IMR-90 (cell line): ENCODE measurements at regions of chr2 and their contacts with region 1.

Region 1: DNA sequence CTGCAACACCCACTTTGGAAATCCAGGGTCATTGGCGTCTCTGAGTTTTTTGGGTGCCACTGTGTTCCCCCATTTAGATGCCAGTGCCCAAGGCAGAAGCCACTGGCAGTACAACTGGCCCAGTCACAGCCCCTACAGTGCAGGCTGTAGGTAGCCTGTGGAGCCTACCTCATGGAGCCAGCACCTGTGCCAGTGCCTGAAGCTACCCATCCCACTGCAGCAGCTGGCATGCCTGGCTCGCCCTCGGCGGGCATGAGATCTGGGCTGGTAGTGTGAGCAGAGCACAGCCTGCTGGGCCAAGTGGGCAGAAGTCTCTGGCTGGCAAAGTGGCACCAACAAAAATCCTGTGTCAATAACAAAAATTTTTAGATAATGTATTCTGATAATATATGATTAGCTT is 1111.4 kb upstream of the NXPH2 start:
- DNase-seq: no peak
- ATAC-seq: no peak
- H3K4me3 ChIP-seq: no peak overlapping the region
- H3K27ac ChIP-seq: no peak overlapping the region
- H3K4me1 ChIP-seq: no peaks in the 10 kb centered on the region
- H3K27me3 ChIP-seq: no peaks in the 10 kb centered on the region
- CTCF ChIP-seq: no peak
- POLR2A ChIP-seq: no peak
- RAD21 ChIP-seq: no peak

Region 2: DNA sequence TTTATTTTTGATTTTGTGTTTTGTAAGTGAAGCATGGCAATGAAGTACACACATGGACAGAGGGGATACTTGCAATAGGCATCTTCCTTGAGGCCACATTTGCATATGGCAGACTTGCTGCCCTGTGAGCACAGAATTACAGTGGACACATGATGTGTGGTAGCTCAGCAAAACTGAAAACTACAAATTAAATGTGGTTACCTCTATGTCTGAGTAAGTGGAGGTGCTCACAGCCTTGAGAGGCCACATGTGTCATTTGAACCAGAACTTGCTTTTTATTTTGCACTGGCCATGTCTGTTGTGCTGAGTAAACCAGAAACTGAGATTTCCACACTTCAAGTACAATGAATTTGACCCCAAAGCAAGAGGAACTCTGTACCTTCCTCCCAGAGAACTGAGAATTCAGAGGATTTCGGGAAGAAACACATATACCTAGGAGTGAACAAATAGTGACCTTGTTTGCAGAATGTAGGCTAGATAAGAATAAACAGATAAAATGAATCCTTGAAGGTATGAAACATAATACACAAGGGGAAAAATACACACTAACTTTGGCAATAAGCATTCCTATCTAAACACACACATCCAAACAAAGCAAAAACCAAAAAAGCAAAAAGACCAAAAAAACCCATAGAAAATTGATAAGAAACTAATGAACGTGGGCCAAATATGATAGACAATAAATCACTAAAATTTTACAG is 112.8 kb before region 1 on chr2:
- CTCF ChIA-PET with region 1: no interaction called
- POLR2A ChIA-PET with region 1: no interaction called
- dilution Hi-C with region 1: no loop called
- in situ Hi-C with region 1: no loop called
- intact Hi-C with region 1: no loop called
- DNase-seq: no peak
- ATAC-seq: no peak
- H3K4me3 ChIP-seq: no peak overlapping the region
- H3K27ac ChIP-seq: no peak overlapping the region
- H3K4me1 ChIP-seq: no peaks in the 10 kb centered on the region
- H3K27me3 ChIP-seq: no peaks in the 10 kb centered on the region
- CTCF ChIP-seq: no peak
- POLR2A ChIP-seq: no peak
- RAD21 ChIP-seq: no peak

Region 3: DNA sequence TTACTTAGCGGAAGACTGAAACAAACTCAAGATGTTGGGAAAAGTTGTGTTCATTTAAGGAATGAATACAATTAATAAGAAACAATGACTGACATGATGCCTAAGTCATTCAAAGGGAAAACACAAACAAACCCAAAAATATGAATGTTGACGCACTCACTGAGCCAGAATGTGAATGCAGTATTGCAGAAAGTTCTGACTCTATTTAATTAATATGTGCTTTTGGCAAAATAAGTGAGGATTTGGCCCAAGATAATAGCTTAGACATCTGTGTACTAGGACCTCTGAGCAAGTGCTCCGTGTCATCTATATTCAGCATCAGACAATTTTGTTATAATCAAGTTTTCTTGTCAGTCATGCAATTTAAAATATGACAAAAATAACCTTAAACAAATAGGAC is 27.3 kb after region 1 on chr2:
- CTCF ChIA-PET with region 1: no interaction called
- POLR2A ChIA-PET with region 1: interaction called, 11 read pairs
- dilution Hi-C with region 1: no loop called
- in situ Hi-C with region 1: no loop called
- intact Hi-C with region 1: no loop called
- DNase-seq: no peak
- ATAC-seq: no peak
- H3K4me3 ChIP-seq: no peak overlapping the region
- H3K27ac ChIP-seq: no peak overlapping the region
- H3K4me1 ChIP-seq: no peaks in the 10 kb centered on the region
- H3K27me3 ChIP-seq: no peaks in the 10 kb centered on the region
- CTCF ChIP-seq: no peak
- POLR2A ChIP-seq: no peak
- RAD21 ChIP-seq: no peak